ENCODE measurements at regions of chr2 and their contacts with region 1.

Region 1: GRCh38 chr2:241877989-241878970 is 8.8 kb downstream of the RTP5 start:
- DNase-seq: peak; percentile 78 to 86 (median 84)
- H3K4me3 ChIP-seq: no peak overlapping the region
- H3K27ac ChIP-seq: no peak overlapping the region
- H3K4me1 ChIP-seq: peaks cover 6 to 32% (median 28%) of the 10 kb centered on the region in 4 experiments
- H3K27me3 ChIP-seq: no peaks in the 10 kb centered on the region

Region 2: DNA sequence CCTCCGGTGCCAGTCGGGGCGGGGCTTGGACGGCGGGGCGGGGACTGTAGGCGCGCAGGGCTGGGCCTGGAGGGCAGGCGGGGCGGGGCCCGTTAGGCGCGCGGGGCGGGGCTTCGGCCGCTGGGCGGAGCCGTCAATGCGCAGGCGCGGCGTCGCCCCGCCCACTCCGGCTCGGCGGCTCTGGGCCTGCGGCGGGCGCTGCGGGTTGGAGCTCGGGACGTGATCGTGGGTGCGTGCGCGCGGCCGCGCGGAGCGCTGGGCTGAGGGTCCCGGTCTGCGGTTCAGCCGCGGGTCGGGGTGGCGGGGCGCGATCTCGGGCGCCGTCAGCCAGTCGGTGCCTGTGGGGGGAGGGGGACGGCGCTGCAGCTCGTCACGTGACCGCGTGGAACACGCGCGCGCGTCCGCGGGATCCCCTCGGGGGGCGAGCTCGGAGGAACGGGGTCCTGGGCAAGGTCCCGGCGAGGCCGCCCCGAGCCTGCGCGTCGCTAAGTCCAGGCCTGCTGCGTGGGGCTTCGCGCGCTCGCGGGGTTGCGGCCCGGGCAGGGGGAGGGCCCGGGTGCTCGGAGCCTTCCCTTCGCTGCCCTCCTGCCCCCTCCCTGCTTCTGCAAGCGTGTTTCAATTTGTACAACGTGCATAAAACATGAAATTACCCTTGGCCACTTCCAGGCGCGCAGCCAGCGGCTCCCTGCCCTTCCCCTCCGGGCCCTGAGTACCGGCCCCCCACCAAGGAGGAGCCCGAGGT is 143.6 kb before region 1 on chr2 and contains the start of gene D2HGDH:
- CTCF ChIA-PET with region 1: interaction called, 17 read pairs
- POLR2A ChIA-PET with region 1: no interaction called
- DNase-seq: peak; percentile 75 to 88 (median 87)
- H3K4me3 ChIP-seq: peak within 1 kb of the TSS; percentile 68 to 85 (median 80)
- H3K27ac ChIP-seq: peak within 1 kb of the TSS; percentile 25 to 78
- H3K4me1 ChIP-seq: peaks cover 0 to 47% (median 25%) of the 10 kb centered on the region in 4 experiments
- H3K27me3 ChIP-seq: no peaks in the 10 kb centered on the region

Region 3: GRCh38 chr2:241741016-241741415 is 137.3 kb before region 1 on chr2:
- CTCF ChIA-PET with region 1: interaction called, 11 read pairs
- POLR2A ChIA-PET with region 1: no interaction called
- DNase-seq: peak; percentile 61 to 87 (median 86)
- H3K4me3 ChIP-seq: peak overlapping the region in 1 of 7 experiments; percentile 42
- H3K27ac ChIP-seq: no peak overlapping the region
- H3K4me1 ChIP-seq: peaks cover 0 to 28% (median 18%) of the 10 kb centered on the region in 4 experiments
- H3K27me3 ChIP-seq: no peaks in the 10 kb centered on the region

Region 4: GRCh38 chr2:241865957-241866789 is 12.1 kb before region 1 on chr2:
- CTCF ChIA-PET with region 1: interaction called, 21 read pairs
- POLR2A ChIA-PET with region 1: no interaction called
- DNase-seq: peak; percentile 55 to 82 (median 62)
- H3K4me3 ChIP-seq: no peak overlapping the region
- H3K27ac ChIP-seq: no peak overlapping the region
- H3K4me1 ChIP-seq: peaks cover 0 to 46% (median 38%) of the 10 kb centered on the region in 4 experiments
- H3K27me3 ChIP-seq: peaks cover 0 to 46% (median 0%) of the 10 kb centered on the region in 5 experiments

Measured in common myeloid progenitor, CD34-positive (primary cell).